HepG2 (cell line): ENCODE measurements at regions of chr14 and their contacts with region 1.

Region 1: GRCh38 chr14:37594238-37594914 is 673 bp downstream of the FOXA1 start:
- DNase-seq: peak; percentile 99
- ATAC-seq: peak; percentile 19
- H3K4me3 ChIP-seq: peak overlapping the region; percentile 87 to 96 (median 95)
- H3K27ac ChIP-seq: peak overlapping the region; percentile 96
- H3K4me1 ChIP-seq: peaks cover 43% of the 10 kb centered on the region
- H3K27me3 ChIP-seq: no peaks in the 10 kb centered on the region; a peak in 1 of 5 replicates
- CTCF ChIP-seq: peak; percentile 95
- EP300 ChIP-seq: peak in 1 of 2 experiments; percentile 23; a peak in 1 of 4 replicates
- POLR2A ChIP-seq: no peak
- RAD21 ChIP-seq: peak; percentile 88

Region 2: GRCh38 chr14:37246427-37246914 is 347.9 kb before region 1 on chr14:
- CTCF ChIA-PET with region 1: interaction called, 51 read pairs
- POLR2A ChIA-PET with region 1: interaction called, 10 read pairs
- in situ Hi-C with region 1: loop called (anchors 5 kb)
- intact Hi-C with region 1: loop called (anchors 1 kb)
- DNase-seq: peak; percentile 86
- ATAC-seq: peak; percentile 79
- H3K4me3 ChIP-seq: no peak overlapping the region
- H3K27ac ChIP-seq: no peak overlapping the region
- H3K4me1 ChIP-seq: peaks cover 33% of the 10 kb centered on the region
- H3K27me3 ChIP-seq: no peaks in the 10 kb centered on the region
- CTCF ChIP-seq: peak; percentile 88
- EP300 ChIP-seq: peak in 1 of 2 experiments; percentile 37; a peak in 1 of 4 replicates
- POLR2A ChIP-seq: no peak
- RAD21 ChIP-seq: peak; percentile 93

Region 3: GRCh38 chr14:37384870-37385596 is 209.3 kb before region 1 on chr14:
- CTCF ChIA-PET with region 1: no interaction called
- POLR2A ChIA-PET with region 1: interaction called, 4 read pairs
- in situ Hi-C with region 1: no loop called
- intact Hi-C with region 1: loop called (anchors 5 kb)
- DNase-seq: peak; percentile 82
- ATAC-seq: peak; percentile 100
- H3K4me3 ChIP-seq: 0 out of 6 replicates have a peak overlapping the region, but pooled peaks of 1 of the 3 experiments have one; percentile 0
- H3K27ac ChIP-seq: peak overlapping the region; percentile 17
- H3K4me1 ChIP-seq: peaks cover 12% of the 10 kb centered on the region
- H3K27me3 ChIP-seq: no peaks in the 10 kb centered on the region
- CTCF ChIP-seq: no peak
- EP300 ChIP-seq: peak in 1 of 2 experiments; percentile 78; a peak in 2 of 4 replicates
- POLR2A ChIP-seq: no peak
- RAD21 ChIP-seq: no peak

Region 4: GRCh38 chr14:37546621-37547447 is 47.5 kb before region 1 on chr14:
- CTCF ChIA-PET with region 1: no interaction called
- POLR2A ChIA-PET with region 1: interaction called, 35 read pairs
- in situ Hi-C with region 1: no loop called
- intact Hi-C with region 1: loop called (anchors 2 kb)
- DNase-seq: peak; percentile 100
- ATAC-seq: peak; percentile 100
- H3K4me3 ChIP-seq: peak overlapping the region; percentile 5 to 38 (median 29); a peak in 5 of 6 replicates
- H3K27ac ChIP-seq: peak overlapping the region; percentile 73
- H3K4me1 ChIP-seq: peaks cover 36% of the 10 kb centered on the region
- H3K27me3 ChIP-seq: no peaks in the 10 kb centered on the region
- CTCF ChIP-seq: no peak
- EP300 ChIP-seq: peak; percentile 77 to 98; a peak in 3 of 4 replicates
- POLR2A ChIP-seq: peak in 1 of 2 experiments; percentile 47; a peak in 1 of 4 replicates
- RAD21 ChIP-seq: peak; percentile 50; the same call in 1 of the 2 replicates

Region 5: DNA sequence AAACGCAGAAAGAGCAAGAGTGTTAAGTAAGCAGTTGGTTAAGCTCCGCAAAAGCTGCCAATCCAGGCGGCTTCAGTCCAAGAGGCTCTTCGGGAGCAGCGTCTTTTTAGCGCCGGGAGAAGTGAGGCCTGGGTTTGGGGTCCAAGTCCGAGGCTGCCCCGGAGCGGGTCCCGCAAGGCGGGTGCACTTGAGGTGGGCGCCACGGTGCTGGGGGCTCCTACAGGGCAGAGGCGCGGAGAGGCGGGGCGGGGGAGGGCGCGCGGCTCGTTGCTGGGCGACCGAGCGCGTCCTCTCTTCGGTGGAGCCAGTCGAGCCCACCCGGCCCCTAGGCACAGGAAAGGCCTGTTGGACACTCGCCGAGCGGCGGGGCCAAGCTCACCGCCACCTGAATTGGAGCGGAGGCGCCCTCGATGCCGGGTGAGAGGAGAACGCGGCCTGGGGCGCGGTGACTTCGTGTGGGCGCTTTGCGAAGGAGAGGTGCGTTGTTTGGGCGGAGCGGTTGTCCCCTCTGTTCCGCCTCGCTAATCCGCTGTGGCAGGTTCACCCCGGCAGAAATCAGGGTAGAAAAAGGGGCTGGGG is 16.7 kb after region 1 on chr14:
- CTCF ChIA-PET with region 1: no interaction called
- POLR2A ChIA-PET with region 1: interaction called, 19 read pairs
- in situ Hi-C with region 1: no loop called
- intact Hi-C with region 1: no loop called
- DNase-seq: no peak
- ATAC-seq: no peak
- H3K4me3 ChIP-seq: no peak overlapping the region
- H3K27ac ChIP-seq: no peak overlapping the region
- H3K4me1 ChIP-seq: peaks cover 20% of the 10 kb centered on the region
- H3K27me3 ChIP-seq: no peaks in the 10 kb centered on the region
- CTCF ChIP-seq: no peak
- EP300 ChIP-seq: no peak
- POLR2A ChIP-seq: no peak
- RAD21 ChIP-seq: no peak

Region 6: GRCh38 chr14:37697489-37698121 is 103.2 kb after region 1 on chr14:
- CTCF ChIA-PET with region 1: no interaction called
- POLR2A ChIA-PET with region 1: interaction called, 7 read pairs
- in situ Hi-C with region 1: no loop called
- intact Hi-C with region 1: loop called (anchors 2 kb)
- DNase-seq: peak; percentile 96
- ATAC-seq: peak; percentile 85
- H3K4me3 ChIP-seq: no peak overlapping the region; a peak in 1 of 6 replicates
- H3K27ac ChIP-seq: peak overlapping the region; percentile 46
- H3K4me1 ChIP-seq: peaks cover 34% of the 10 kb centered on the region
- H3K27me3 ChIP-seq: no peaks in the 10 kb centered on the region
- CTCF ChIP-seq: no peak
- EP300 ChIP-seq: peak in 1 of 2 experiments; percentile 82; a peak in 2 of 4 replicates
- POLR2A ChIP-seq: no peak
- RAD21 ChIP-seq: no peak

Region 7: GRCh38 chr14:37864861-37865718 is 270.7 kb after region 1 on chr14:
- CTCF ChIA-PET with region 1: no interaction called
- POLR2A ChIA-PET with region 1: interaction called, 48 read pairs
- in situ Hi-C with region 1: no loop called
- intact Hi-C with region 1: loop called (anchors 1 kb)
- DNase-seq: peak; percentile 100
- ATAC-seq: peak; percentile 92
- H3K4me3 ChIP-seq: peak overlapping the region; percentile 18 to 56 (median 47)
- H3K27ac ChIP-seq: peak overlapping the region; percentile 82
- H3K4me1 ChIP-seq: peaks cover 63% of the 10 kb centered on the region
- H3K27me3 ChIP-seq: no peaks in the 10 kb centered on the region
- CTCF ChIP-seq: peak; percentile 72
- EP300 ChIP-seq: peak; percentile 99
- POLR2A ChIP-seq: peak; percentile 48 to 75
- RAD21 ChIP-seq: peak; percentile 77